Activated naive CD4-positive, alpha-beta T cell treated with anti-CD3 and anti-CD28 coated beads, Interleukin-2, amount 10 ng/mL, durations not matched to agents 7 days and 5 days (primary cell): ENCODE measurements at regions of chr1 and their contacts with region 1.

Region 1: DNA sequence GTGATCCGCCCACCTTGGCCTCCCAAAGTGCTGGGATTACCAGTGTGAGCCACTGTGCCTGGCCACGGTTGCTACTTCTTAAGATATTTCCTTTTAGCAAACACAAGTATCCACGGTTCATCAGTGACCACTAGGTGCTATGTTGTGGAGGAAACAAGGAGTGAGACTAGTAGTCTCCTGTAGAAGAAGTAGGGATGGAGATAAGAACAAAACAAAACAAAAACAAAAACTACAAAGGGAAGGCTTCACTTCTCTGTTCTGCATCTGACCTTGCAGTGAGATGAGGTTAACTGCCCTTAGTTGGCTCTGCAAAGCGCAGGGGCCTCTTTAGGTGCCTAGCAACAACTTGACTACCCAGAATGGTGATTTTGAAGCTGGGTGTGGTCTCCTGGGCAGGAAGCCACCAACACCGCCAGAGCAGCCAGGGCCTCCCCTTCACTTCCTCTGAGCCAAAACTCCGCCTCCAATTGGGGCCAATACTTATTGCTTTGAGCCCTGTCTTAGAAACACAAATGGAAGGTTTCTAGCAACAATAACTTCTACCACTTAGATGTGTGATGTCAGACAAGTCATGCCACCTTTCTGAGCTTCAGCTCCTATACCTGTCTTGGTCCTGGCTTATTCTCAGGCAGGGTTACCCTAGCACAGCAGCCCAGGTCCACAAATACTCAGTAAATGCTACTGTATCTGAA is 12.8 kb upstream of the CDC42 start:
- DNase-seq: peak; percentile 96
- H3K4me3 Mint-ChIP-seq: peak overlapping the region; percentile 67
- H3K27ac Mint-ChIP-seq: peak overlapping the region; percentile 100
- H3K4me1 Mint-ChIP-seq: peaks cover 58% of the 10 kb centered on the region
- H3K27me3 Mint-ChIP-seq: no peaks in the 10 kb centered on the region

Region 2: GRCh38 chr1:21782868-21783678 is 256.7 kb before region 1 on chr1 and contains the start of gene USP48:
- CTCF ChIA-PET with region 1: no interaction called
- DNase-seq: peak; percentile 97
- H3K4me3 Mint-ChIP-seq: peak within 1 kb of the TSS; percentile 90
- H3K27ac Mint-ChIP-seq: peak within 1 kb of the TSS; percentile 99
- H3K4me1 Mint-ChIP-seq: peaks cover 32% of the 10 kb centered on the region
- H3K27me3 Mint-ChIP-seq: peaks cover 6% of the 10 kb centered on the region

Region 3: DNA sequence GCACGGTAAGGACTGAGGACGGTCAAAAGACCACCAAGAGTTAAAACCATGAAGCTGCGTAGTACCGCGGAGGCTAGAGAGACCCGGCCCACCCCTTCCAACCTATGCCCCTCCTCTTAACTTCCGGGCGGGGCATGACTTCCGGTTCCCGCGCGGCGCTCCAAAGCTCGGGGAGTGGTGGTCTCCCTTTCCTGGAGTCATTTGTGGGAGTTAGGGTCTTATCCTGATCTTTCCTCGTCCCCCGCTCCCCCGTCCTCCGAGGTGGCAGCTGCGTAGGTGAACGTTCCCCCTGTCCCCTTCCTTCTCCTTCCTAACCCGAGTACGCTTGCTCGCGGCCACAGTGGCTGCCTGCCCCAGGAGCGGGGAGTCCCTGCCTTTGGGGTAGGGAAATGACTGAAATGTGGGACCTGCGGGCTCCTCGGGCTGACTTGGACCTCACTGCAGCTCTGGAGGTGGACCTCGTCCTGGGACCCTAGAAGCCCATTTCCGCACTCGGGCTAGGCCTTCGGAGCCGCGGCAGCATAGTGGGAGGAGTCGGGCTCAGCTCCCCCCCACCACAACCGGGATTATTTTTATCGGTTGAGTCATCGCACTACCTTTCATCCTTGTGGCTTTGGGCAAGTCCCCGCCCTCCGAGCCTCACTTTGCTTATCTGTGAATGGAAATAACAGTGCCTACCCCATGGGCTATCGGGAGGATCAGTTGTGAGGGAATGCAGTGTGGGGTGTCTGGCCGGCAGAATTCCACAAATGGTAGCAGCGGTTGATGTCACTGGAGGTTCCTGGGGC is 14.2 kb before region 1 on chr1:
- CTCF ChIA-PET with region 1: interaction called, 22 read pairs
- DNase-seq: peak; percentile 94
- H3K4me3 Mint-ChIP-seq: peak overlapping the region; percentile 88
- H3K27ac Mint-ChIP-seq: peak overlapping the region; percentile 97
- H3K4me1 Mint-ChIP-seq: peaks cover 72% of the 10 kb centered on the region
- H3K27me3 Mint-ChIP-seq: no peaks in the 10 kb centered on the region